Naive thymus-derived CD4-positive, alpha-beta T cell (primary cell): ENCODE measurements at regions of chr11 and their contacts with region 1.

Region 1: GRCh38 chr11:128157423-128158298 is 429.7 kb downstream of the ETS1 start:
- DNase-seq: peak in 8 of 9 donors; percentile 44 to 82 (median 74)
- ATAC-seq: peak; percentile 96
- H3K4me3 ChIP-seq: peak overlapping the region; percentile 33
- H3K4me3 Mint-ChIP-seq: peak overlapping the region in 9 of 10 donors; percentile 64 to 87 (median 77)
- H3K27ac ChIP-seq: peak overlapping the region; percentile 4
- H3K27ac Mint-ChIP-seq: peak overlapping the region in 7 of 9 donors; percentile 4 to 86 (median 58)
- H3K4me1 ChIP-seq: no peaks in the 10 kb centered on the region
- H3K4me1 Mint-ChIP-seq: peaks cover 0 to 10% (median 4%) of the 10 kb centered on the region in 7 donors
- H3K27me3 ChIP-seq: no peaks in the 10 kb centered on the region
- H3K27me3 Mint-ChIP-seq: peaks cover 0 to 28% (median 0%) of the 10 kb centered on the region in 5 donors

Region 2: GRCh38 chr11:128026596-128026995 is 131.1 kb before region 1 on chr11:
- CTCF ChIA-PET with region 1: interaction called, 59 read pairs
- POLR2A ChIA-PET with region 1: interaction called, 6 read pairs
- intact Hi-C with region 1: loop called (anchors 1 kb)
- DNase-seq: no peak
- ATAC-seq: peak; percentile 34
- H3K4me3 ChIP-seq: no peak overlapping the region
- H3K4me3 Mint-ChIP-seq: no peak overlapping the region
- H3K27ac ChIP-seq: no peak overlapping the region
- H3K27ac Mint-ChIP-seq: peak overlapping the region in 1 of 9 donors; percentile 12
- H3K4me1 ChIP-seq: peaks cover 0 to under 1% of the 10 kb centered on the region in 2 donors
- H3K4me1 Mint-ChIP-seq: peaks cover 0 to 5% (median 3%) of the 10 kb centered on the region in 7 donors
- H3K27me3 ChIP-seq: no peaks in the 10 kb centered on the region
- H3K27me3 Mint-ChIP-seq: peaks cover 0 to 37% (median 2%) of the 10 kb centered on the region in 5 donors

Region 3: DNA sequence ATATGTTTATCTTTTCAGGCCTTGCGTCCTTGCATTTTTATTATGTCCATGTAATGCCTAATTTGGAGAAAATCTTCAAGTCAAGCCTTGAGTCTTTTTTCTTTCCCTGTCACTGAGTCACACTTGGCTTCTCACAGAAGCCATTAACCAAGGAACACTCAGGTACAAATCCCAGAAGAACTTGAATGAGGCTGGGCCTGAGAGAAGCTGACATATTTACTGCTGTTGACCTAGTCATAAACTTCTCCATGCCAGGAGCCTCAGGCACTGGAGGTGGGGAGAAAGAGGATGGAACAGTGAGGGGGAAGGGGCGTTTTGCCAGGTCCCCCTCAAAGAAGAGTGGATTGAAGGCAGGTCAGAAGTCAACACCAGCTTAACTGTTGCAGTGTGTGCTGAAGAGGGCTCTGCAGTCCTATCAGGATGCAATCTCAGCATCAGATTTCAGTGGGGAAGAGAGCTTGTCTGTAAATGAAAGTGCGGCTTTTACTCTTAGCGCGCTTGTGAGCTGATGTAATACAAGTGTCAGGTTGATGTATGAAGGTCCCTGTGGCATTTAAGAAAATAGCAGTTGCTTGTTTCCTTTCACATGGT is 96.3 kb before region 1 on chr11:
- CTCF ChIA-PET with region 1: interaction called, 12 read pairs
- POLR2A ChIA-PET with region 1: no interaction called
- intact Hi-C with region 1: no loop called
- DNase-seq: no peak
- ATAC-seq: no peak
- H3K4me3 ChIP-seq: no peak overlapping the region
- H3K4me3 Mint-ChIP-seq: no peak overlapping the region
- H3K27ac ChIP-seq: no peak overlapping the region
- H3K27ac Mint-ChIP-seq: no peak overlapping the region
- H3K4me1 ChIP-seq: peaks cover 0 to 16% of the 10 kb centered on the region in 2 donors
- H3K4me1 Mint-ChIP-seq: peaks cover under 1 to 17% (median 4%) of the 10 kb centered on the region in 7 donors
- H3K27me3 ChIP-seq: no peaks in the 10 kb centered on the region
- H3K27me3 Mint-ChIP-seq: peaks cover 0 to 12% (median 0%) of the 10 kb centered on the region in 5 donors

Region 4: GRCh38 chr11:128146926-128147605 is 10.6 kb before region 1 on chr11:
- CTCF ChIA-PET with region 1: interaction called, 13 read pairs
- POLR2A ChIA-PET with region 1: no interaction called
- intact Hi-C with region 1: no loop called
- DNase-seq: no peak
- ATAC-seq: no peak
- H3K4me3 ChIP-seq: no peak overlapping the region
- H3K4me3 Mint-ChIP-seq: no peak overlapping the region
- H3K27ac ChIP-seq: no peak overlapping the region
- H3K27ac Mint-ChIP-seq: peak overlapping the region in 2 of 9 donors; percentile 9 to 10
- H3K4me1 ChIP-seq: no peaks in the 10 kb centered on the region
- H3K4me1 Mint-ChIP-seq: peaks cover 0 to 5% (median 0%) of the 10 kb centered on the region in 7 donors
- H3K27me3 ChIP-seq: no peaks in the 10 kb centered on the region
- H3K27me3 Mint-ChIP-seq: peaks cover 0 to 10% (median 0%) of the 10 kb centered on the region in 5 donors

Region 5: DNA sequence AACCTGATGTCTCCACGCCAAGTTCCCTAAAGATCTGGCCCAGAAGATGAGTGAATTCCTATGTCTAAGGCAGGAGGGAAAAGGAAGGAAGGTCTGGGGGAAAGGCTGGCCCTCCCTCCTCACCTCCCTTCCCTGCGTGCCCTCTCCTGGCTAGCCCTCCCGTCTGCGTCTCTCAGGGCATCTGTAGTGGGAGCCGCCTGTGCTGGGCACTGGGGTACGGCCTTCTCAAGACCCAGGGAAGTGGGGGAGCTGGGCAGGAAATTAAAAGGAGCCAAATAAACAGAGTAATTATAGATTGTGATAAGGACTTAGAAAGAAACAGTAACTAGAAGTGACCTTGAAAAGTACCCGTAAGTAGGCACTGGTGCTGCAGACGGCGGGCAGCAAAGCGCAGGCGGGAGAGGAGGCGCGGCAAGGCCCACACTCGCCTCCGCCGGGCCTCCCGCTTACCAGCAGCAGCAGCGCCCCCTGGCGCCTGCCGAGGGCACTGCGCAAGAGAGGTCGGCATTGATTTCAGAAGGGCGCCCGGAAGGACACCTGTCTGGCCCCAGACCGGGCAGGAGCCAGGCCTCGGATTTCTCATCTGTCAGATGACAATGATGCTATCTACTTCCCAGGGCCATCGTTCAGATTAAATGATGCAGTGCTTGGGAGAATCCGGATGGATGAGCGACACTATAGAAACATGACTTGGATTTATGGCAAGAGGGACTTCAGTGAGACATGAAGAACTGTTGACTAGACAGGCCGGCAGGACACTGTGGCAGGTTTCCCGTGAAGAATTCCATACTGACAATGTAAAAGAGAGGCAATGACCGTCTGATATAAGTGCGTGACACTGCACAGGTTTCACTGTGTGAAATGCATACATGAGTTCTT is 702.1 kb after region 1 on chr11:
- CTCF ChIA-PET with region 1: interaction called, 7 read pairs
- POLR2A ChIA-PET with region 1: no interaction called
- intact Hi-C with region 1: loop called (anchors 1 kb)
- DNase-seq: peak; percentile 55 to 83 (median 66)
- ATAC-seq: peak; percentile 95
- H3K4me3 ChIP-seq: no peak overlapping the region
- H3K4me3 Mint-ChIP-seq: peak overlapping the region in 3 of 10 donors; percentile 12 to 26 (median 18)
- H3K27ac ChIP-seq: no peak overlapping the region
- H3K27ac Mint-ChIP-seq: no peak overlapping the region
- H3K4me1 ChIP-seq: peaks cover 0 to 4% of the 10 kb centered on the region in 2 donors
- H3K4me1 Mint-ChIP-seq: peaks cover 0 to 9% (median 5%) of the 10 kb centered on the region in 7 donors
- H3K27me3 ChIP-seq: no peaks in the 10 kb centered on the region
- H3K27me3 Mint-ChIP-seq: peaks cover 0 to 16% (median 0%) of the 10 kb centered on the region in 5 donors

Region 6: GRCh38 chr11:128956401-128957201 is 798.9 kb after region 1 on chr11:
- CTCF ChIA-PET with region 1: interaction called, 9 read pairs
- POLR2A ChIA-PET with region 1: no interaction called
- intact Hi-C with region 1: loop called in 1 of 2 experiments (anchors 1 kb)
- DNase-seq: peak in 6 of 9 donors; percentile 10 to 48 (median 34)
- ATAC-seq: peak; percentile 60
- H3K4me3 ChIP-seq: no peak overlapping the region
- H3K4me3 Mint-ChIP-seq: peak overlapping the region in 4 of 10 donors; percentile 15 to 52 (median 30)
- H3K27ac ChIP-seq: no peak overlapping the region
- H3K27ac Mint-ChIP-seq: no peak overlapping the region
- H3K4me1 ChIP-seq: no peaks in the 10 kb centered on the region
- H3K4me1 Mint-ChIP-seq: peaks cover 2 to 6% (median 4%) of the 10 kb centered on the region in 7 donors
- H3K27me3 ChIP-seq: no peaks in the 10 kb centered on the region
- H3K27me3 Mint-ChIP-seq: peaks cover 0 to 33% (median 8%) of the 10 kb centered on the region in 5 donors

Region 7: DNA sequence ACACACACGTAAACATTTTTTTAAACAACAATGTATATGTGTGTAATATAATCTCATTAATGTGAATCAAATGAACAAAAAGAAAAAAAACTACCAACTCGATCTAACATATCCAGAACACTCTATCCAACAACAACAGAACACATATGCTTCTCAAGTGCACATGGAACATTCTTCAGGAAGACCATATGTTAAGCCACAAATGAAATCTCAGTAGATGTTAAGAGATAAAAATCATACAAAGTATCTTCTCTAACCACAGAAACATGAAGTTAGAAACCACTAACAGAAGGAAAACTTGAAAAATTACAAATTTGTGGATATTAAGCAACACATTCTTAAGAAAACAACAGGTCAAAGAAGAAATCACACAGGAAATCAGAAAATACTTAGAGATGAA is 1632.4 kb after region 1 on chr11:
- CTCF ChIA-PET with region 1: no interaction called
- POLR2A ChIA-PET with region 1: no interaction called
- intact Hi-C with region 1: no loop called
- DNase-seq: peak in 1 of 9 donors; percentile 3
- ATAC-seq: no peak
- H3K4me3 ChIP-seq: no peak overlapping the region
- H3K4me3 Mint-ChIP-seq: peak overlapping the region in 3 of 10 donors; percentile 24 to 34 (median 33)
- H3K27ac ChIP-seq: no peak overlapping the region
- H3K27ac Mint-ChIP-seq: peak overlapping the region in 6 of 9 donors; percentile 5 to 72 (median 34)
- H3K4me1 ChIP-seq: no peaks in the 10 kb centered on the region
- H3K4me1 Mint-ChIP-seq: peaks cover 6 to 39% (median 14%) of the 10 kb centered on the region in 7 donors
- H3K27me3 ChIP-seq: no peaks in the 10 kb centered on the region
- H3K27me3 Mint-ChIP-seq: peaks cover 0 to 4% (median 0%) of the 10 kb centered on the region in 5 donors